ENCODE measurements at regions of chr1 and their contacts with region 1.

Region 1: DNA sequence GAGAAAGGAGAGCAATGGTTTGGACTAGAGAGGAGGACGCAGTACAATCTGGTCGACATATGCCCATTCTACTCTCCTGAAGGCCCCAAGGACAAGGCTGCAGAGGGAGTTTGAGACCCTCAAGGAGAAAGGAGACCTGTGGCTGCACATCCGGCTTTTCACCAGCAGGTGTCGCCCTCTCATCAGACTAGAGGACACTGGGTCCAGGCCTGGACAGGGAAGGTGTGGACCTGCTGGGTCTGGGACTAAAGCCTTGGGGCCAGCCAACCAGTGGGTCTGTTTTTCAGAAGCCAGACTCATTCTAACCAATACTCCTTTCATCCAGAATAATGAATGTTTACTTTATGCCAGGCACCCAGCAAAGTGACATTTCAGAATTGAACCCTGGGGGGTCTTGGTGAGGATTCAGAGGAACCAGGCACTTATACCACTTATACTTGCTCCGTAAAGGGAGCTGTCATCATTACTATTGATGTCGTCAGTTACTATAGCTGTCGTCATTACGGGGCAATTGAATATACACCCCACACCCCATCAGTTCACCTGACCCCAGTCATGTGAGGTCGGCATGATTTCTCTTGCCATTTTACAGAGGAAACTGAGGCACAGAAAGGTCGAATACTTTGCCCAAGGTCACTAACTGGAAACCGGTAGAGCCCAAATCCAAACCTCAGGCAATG is 5.1 kb downstream of the SRARP start:
- DNase-seq: peak; percentile 67
- ATAC-seq: peak; percentile 33
- H3K4me3 Mint-ChIP-seq: no peak overlapping the region
- H3K27ac Mint-ChIP-seq: no peak overlapping the region
- H3K4me1 Mint-ChIP-seq: peaks cover 42% of the 10 kb centered on the region
- H3K27me3 Mint-ChIP-seq: no peaks in the 10 kb centered on the region
- CTCF ChIP-seq: peak; percentile 84

Region 2: GRCh38 chr1:15803354-15803753 is 205.8 kb before region 1 on chr1:
- CTCF ChIA-PET with region 1: interaction called, 4 read pairs
- POLR2A ChIA-PET with region 1: interaction called, 8 read pairs
- intact Hi-C with region 1: loop called (anchors 1 kb)
- DNase-seq: peak; percentile 17
- ATAC-seq: peak; percentile 55
- H3K4me3 Mint-ChIP-seq: no peak overlapping the region
- H3K27ac Mint-ChIP-seq: no peak overlapping the region
- H3K4me1 Mint-ChIP-seq: peaks cover 7% of the 10 kb centered on the region
- H3K27me3 Mint-ChIP-seq: peaks cover 5% of the 10 kb centered on the region
- CTCF ChIP-seq: no peak

Region 3: GRCh38 chr1:15985611-15986297 is 23.4 kb before region 1 on chr1:
- CTCF ChIA-PET with region 1: no interaction called
- POLR2A ChIA-PET with region 1: interaction called, 10 read pairs
- intact Hi-C with region 1: no loop called
- DNase-seq: no peak
- ATAC-seq: no peak
- H3K4me3 Mint-ChIP-seq: no peak overlapping the region
- H3K27ac Mint-ChIP-seq: no peak overlapping the region
- H3K4me1 Mint-ChIP-seq: no peaks in the 10 kb centered on the region
- H3K27me3 Mint-ChIP-seq: no peaks in the 10 kb centered on the region
- CTCF ChIP-seq: no peak

Region 4: GRCh38 chr1:16055613-16056520 is 46.7 kb after region 1 on chr1:
- CTCF ChIA-PET with region 1: interaction called, 5 read pairs
- POLR2A ChIA-PET with region 1: no interaction called
- intact Hi-C with region 1: loop called (anchors 1 kb)
- DNase-seq: peak; percentile 77
- ATAC-seq: peak; percentile 100
- H3K4me3 Mint-ChIP-seq: no peak overlapping the region
- H3K27ac Mint-ChIP-seq: no peak overlapping the region
- H3K4me1 Mint-ChIP-seq: peaks cover 6% of the 10 kb centered on the region
- H3K27me3 Mint-ChIP-seq: peaks cover 6% of the 10 kb centered on the region
- CTCF ChIP-seq: no peak

Region 5: GRCh38 chr1:16243936-16244649 is 234.9 kb after region 1 on chr1:
- CTCF ChIA-PET with region 1: no interaction called
- POLR2A ChIA-PET with region 1: interaction called, 3 read pairs
- intact Hi-C with region 1: loop called (anchors 1 kb)
- DNase-seq: peak; percentile 59
- ATAC-seq: peak; percentile 92
- H3K4me3 Mint-ChIP-seq: no peak overlapping the region
- H3K27ac Mint-ChIP-seq: no peak overlapping the region
- H3K4me1 Mint-ChIP-seq: peaks cover 14% of the 10 kb centered on the region
- H3K27me3 Mint-ChIP-seq: no peaks in the 10 kb centered on the region
- CTCF ChIP-seq: no peak